Dorsolateral prefrontal cortex (tissue), 120 donors: ENCODE measurements at regions of chr4 and their contacts with region 1.

Region 1: DNA sequence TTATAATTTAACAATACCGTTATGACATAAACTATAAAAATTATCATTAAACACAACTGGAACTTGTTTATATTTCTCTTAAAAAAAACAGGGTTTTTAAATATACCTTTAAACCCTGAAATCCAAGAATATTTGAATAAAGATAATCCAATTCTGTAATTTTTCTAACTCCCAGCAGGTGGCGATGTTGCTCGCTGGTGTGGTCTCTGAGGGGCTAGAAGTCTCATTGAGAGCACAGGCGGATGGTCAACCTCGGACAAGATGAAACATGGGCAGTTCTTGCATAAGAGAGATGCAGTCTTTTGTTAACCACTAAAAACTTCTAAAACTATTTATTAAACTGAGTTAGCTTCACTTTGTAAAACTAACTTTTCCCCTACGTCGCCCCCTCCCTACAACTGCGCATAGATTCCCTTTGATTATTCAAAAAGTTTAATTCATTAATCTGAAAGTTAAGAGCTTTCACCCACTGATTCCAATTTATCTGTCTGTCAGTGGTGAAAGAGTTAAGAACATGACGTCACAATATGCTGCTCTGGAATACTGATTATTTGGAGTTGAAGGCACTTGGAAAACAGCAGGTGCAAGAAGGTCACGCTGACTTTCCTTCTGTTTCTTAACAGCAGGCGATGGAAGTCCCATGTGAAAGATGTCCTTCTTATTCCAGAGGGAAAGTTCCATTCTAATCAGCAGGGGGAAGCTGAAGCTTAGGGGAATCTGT is 29.5 kb downstream of the DMP1 start:
- DNase-seq: peak in 7 of 10 donors; percentile 38 to 59 (median 49)
- H3K4me3 ChIP-seq: peak overlapping the region in 40 of 59 donors; percentile 0 to 53 (median 22)
- H3K27ac ChIP-seq: peak overlapping the region in 56 of 59 donors; percentile 3 to 84 (median 70)
- H3K27me3 ChIP-seq: no peaks in the 10 kb centered on the region
- CTCF ChIP-seq: peak; percentile 76 to 99 (median 88)

Region 2: GRCh38 chr4:87543835-87544461 is 135.7 kb before region 1 on chr4:
- intact Hi-C with region 1: loop called (anchors 2 to 5 kb)
- DNase-seq: peak in 2 of 10 donors; percentile 37 to 58
- H3K4me3 ChIP-seq: no peak overlapping the region
- H3K27ac ChIP-seq: peak overlapping the region in 53 of 59 donors; percentile 19 to 94 (median 80)
- H3K27me3 ChIP-seq: no peaks in the 10 kb centered on the region
- CTCF ChIP-seq: peak; percentile 34 to 85 (median 72)

Region 3: GRCh38 chr4:87559109-87559837 is 120.3 kb before region 1 on chr4:
- intact Hi-C with region 1: no loop called
- DNase-seq: peak in 1 of 10 donors; percentile 44
- H3K4me3 ChIP-seq: no peak overlapping the region
- H3K27ac ChIP-seq: no peak overlapping the region
- H3K27me3 ChIP-seq: no peaks in the 10 kb centered on the region
- CTCF ChIP-seq: no peak

Region 4: GRCh38 chr4:87848622-87849351 is 169.2 kb after region 1 on chr4:
- intact Hi-C with region 1: loop called in 1 of 2 experiments (anchors 2 kb)
- DNase-seq: peak; percentile 28 to 78 (median 64)
- H3K4me3 ChIP-seq: peak overlapping the region in 57 of 59 donors; percentile 7 to 66 (median 48)
- H3K27ac ChIP-seq: peak overlapping the region; percentile 52 to 94 (median 86)
- H3K27me3 ChIP-seq: no peaks in the 10 kb centered on the region
- CTCF ChIP-seq: peak in 54 of 56 donors; percentile 50 to 88 (median 66)

Region 5: GRCh38 chr4:87973283-87974169 is 293.9 kb after region 1 on chr4:
- intact Hi-C with region 1: loop called (anchors 5 kb)
- DNase-seq: peak in 8 of 10 donors; percentile 31 to 73 (median 60)
- H3K4me3 ChIP-seq: peak overlapping the region in 55 of 59 donors; percentile 3 to 67 (median 44)
- H3K27ac ChIP-seq: peak overlapping the region in 45 of 59 donors; percentile 2 to 97 (median 88)
- H3K27me3 ChIP-seq: no peaks in the 10 kb centered on the region
- CTCF ChIP-seq: peak; percentile 85 to 99 (median 92)

Region 6: GRCh38 chr4:88211473-88212252 is 532.1 kb after region 1 on chr4:
- intact Hi-C with region 1: loop called (anchors 10 kb)
- DNase-seq: peak in 3 of 10 donors; percentile 5 to 49 (median 46)
- H3K4me3 ChIP-seq: no peak overlapping the region
- H3K27ac ChIP-seq: no peak overlapping the region
- H3K27me3 ChIP-seq: no peaks in the 10 kb centered on the region
- CTCF ChIP-seq: peak; percentile 67 to 92 (median 82)